Endothelial cell of umbilical vein (primary cell): ENCODE measurements at regions of chr6 and their contacts with region 1.

Region 1: DNA sequence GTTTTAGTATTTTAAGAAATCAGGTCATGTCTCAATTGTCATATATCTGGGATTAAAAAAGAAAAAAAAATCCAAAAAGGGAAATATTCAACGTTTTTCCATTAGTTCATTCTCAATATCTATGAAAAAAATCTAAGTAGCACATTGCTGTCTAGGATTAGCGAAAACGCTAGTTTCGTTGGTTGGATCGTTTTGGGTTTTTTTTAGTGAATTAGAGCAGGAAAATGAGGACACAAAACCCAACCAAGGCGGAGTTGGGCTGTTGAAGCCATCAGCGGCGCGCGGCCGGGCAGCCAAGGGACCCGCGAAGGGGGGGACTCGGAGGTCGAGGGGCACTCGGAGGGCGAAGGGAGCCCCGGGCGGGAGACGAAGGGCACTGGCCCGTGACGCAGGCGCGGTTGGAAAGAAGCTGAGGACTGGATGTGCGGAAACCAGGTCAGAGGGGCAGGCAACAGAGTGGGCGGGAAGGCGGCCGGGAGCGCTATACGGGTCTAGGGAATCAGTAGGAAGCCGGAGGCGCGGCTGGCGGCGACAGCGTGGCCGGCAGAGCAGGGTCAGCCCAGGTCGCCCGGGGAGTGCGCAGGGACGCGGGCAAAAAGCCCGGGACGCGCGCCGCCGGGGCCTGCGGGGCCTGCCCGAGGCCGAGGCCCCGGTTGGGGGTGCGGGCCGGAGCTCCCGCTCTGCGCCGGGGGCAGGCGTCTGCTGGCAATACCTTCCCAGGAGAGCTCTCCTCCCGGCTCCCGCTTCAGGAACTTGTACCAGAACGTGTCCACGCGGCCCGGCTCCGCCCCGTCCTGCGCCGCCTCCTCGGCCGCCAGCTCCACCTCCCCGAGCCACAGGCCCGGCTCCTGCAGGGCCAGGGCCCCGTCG is 599 bp downstream of the EPM2A start:
- DNase-seq: peak; percentile 89
- H3K4me3 ChIP-seq: peak overlapping the region; percentile 51 to 60 (median 56)
- H3K27ac ChIP-seq: peak overlapping the region; percentile 87
- H3K4me1 ChIP-seq: peaks cover 18% of the 10 kb centered on the region
- H3K27me3 ChIP-seq: no peaks in the 10 kb centered on the region
- CTCF ChIP-seq: no peak
- POLR2A ChIP-seq: peak; percentile 91

Region 2: DNA sequence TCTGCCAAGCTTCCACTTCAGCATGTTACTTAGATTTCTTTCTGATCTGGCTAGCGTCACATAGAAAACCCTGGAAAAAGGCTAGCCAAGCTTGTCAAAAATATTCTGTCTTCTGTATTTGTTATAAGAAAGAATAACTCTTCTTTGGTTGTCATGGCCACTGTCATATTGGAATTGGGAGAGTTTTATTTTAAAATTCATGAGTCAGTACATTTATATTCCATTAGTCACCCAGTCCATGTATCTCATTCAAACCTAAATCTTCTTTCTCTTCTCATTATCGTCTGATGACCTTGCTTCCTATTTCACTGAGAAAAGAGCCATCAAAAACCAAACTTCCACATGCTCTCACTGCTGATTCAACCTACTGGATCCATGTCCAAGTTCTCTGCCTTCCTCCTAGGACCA is 65.1 kb before region 1 on chr6:
- CTCF ChIA-PET with region 1: interaction called, 3 read pairs
- POLR2A ChIA-PET with region 1: no interaction called
- dilution Hi-C with region 1: no loop called
- intact Hi-C with region 1: loop called (anchors 2 kb)
- DNase-seq: peak; percentile 69
- H3K4me3 ChIP-seq: peak overlapping the region in 1 of 3 experiments; percentile 17
- H3K27ac ChIP-seq: peak overlapping the region; percentile 94
- H3K4me1 ChIP-seq: peaks cover 26% of the 10 kb centered on the region
- H3K27me3 ChIP-seq: no peaks in the 10 kb centered on the region
- CTCF ChIP-seq: no peak
- POLR2A ChIP-seq: no peak

Region 3: DNA sequence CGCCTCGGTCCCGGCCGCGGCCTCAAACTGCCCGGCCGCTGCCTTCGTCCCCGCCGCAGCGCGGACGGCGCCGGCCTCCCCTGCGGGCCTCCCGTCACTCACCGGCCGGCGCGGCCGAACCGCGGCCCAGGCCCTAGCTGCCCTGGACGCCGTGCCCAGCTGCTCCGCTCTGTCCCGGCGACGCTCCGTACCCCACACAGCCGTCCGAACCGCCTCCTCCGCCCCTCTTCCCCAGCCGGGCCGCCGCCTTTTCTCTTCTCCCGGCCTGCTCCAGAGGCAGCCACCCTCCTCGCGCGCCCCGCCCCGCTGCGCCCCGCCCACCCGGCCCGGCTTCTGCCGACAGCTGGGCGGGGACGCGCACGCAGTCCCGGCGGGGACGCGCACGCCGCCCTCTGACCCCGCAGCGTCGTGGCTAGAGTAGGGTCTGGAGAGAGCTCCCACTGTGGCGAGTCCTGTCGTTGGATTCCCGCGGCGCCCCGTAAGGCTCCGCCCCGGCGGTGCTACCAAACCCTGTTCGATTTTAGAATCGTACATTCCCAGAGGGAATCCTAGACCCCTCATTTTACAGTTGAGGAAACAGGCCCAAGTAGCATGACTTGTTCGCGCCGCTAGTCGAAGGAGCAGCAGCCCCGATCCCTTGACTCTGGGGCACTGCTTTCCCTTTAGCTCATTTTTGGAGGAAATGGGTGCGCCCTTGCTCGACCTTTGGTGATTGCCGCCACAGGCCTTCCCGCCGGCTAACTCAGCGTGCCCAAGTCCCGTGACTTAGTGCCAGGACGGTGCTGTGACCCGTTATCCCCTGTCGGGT is 80.0 kb after region 1 on chr6 and contains the start of gene FBXO30:
- CTCF ChIA-PET with region 1: interaction called, 9 read pairs
- POLR2A ChIA-PET with region 1: interaction called, 11 read pairs
- dilution Hi-C with region 1: no loop called
- intact Hi-C with region 1: loop called (anchors 1 kb)
- DNase-seq: peak; percentile 95
- H3K4me3 ChIP-seq: peak within 1 kb of the TSS; percentile 56 to 95 (median 90)
- H3K27ac ChIP-seq: peak within 1 kb of the TSS; percentile 83
- H3K4me1 ChIP-seq: peaks cover 28% of the 10 kb centered on the region
- H3K27me3 ChIP-seq: no peaks in the 10 kb centered on the region
- CTCF ChIP-seq: no peak
- POLR2A ChIP-seq: peak; percentile 71
- total RNA-seq, gene FBXO30: 10.4 and 11.1 TPM in 2 replicates

Region 4: GRCh38 chr6:146103416-146104072 is 368.8 kb after region 1 on chr6:
- CTCF ChIA-PET with region 1: no interaction called
- POLR2A ChIA-PET with region 1: no interaction called
- dilution Hi-C with region 1: no loop called
- intact Hi-C with region 1: no loop called
- DNase-seq: no peak
- H3K4me3 ChIP-seq: no peak overlapping the region
- H3K27ac ChIP-seq: no peak overlapping the region
- H3K4me1 ChIP-seq: no peaks in the 10 kb centered on the region
- H3K27me3 ChIP-seq: no peaks in the 10 kb centered on the region
- CTCF ChIP-seq: no peak
- POLR2A ChIP-seq: no peak